PC-9 (cell line): ENCODE measurements at regions of chr11 and their contacts with region 1.

Region 1: GRCh38 chr11:63909591-63910506 is 7.1 kb downstream of the RCOR2 start:
- DNase-seq: no peak
- H3K4me3 ChIP-seq: no peak overlapping the region
- H3K27ac ChIP-seq: no peak overlapping the region
- H3K4me1 ChIP-seq: no peaks in the 10 kb centered on the region
- H3K27me3 ChIP-seq: no peaks in the 10 kb centered on the region
- CTCF ChIP-seq: no peak

Region 2: GRCh38 chr11:63779039-63779438 is 130.8 kb before region 1 on chr11:
- CTCF ChIA-PET with region 1: interaction called, 11 read pairs
- POLR2A ChIA-PET with region 1: interaction called, 5 read pairs
- intact Hi-C with region 1: no loop called
- DNase-seq: no peak
- H3K4me3 ChIP-seq: no peak overlapping the region
- H3K27ac ChIP-seq: no peak overlapping the region
- H3K4me1 ChIP-seq: no peaks in the 10 kb centered on the region
- H3K27me3 ChIP-seq: no peaks in the 10 kb centered on the region
- CTCF ChIP-seq: no peak

Region 3: DNA sequence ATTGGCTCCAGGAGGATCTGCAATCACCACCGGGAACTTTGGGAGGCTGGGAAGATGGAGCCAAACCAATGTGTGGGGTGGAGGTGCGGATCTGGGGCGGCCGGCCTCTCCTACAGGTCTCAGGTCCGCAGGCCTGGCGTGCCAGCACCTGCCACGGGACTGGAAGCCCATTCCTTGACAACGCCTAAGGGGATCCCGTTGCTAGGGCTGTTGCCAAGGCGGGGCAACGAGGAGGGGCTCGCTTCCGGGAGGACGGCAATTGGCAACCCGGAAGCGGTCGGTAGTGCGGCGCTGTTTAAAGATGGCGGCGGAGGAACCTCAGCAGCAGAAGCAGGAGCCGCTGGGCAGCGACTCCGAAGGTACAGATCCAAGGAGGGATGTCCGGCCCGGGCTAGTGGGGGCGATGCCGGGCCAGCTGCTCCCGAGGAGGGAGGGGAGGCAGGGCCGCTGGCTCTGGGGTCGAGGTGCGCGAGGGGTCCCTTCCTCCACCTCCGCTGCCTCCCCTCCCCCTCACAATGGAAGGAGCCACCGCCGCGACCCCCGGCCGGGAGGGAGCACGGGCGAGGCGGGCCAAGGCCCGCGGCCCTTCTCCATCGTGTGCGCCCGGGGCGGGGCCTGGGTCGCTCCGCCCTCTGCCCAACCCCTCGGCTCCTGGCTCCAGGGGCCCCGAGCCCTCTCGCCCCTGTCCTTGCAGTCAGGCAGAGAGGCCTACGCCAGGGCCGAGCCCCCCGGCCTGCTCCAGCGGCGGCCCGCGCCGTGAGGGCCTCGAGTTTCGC is 76.5 kb after region 1 on chr11 and contains the start of gene OTUB1:
- CTCF ChIA-PET with region 1: no interaction called
- POLR2A ChIA-PET with region 1: no interaction called
- intact Hi-C with region 1: no loop called
- DNase-seq: peak; percentile 92 to 98
- H3K4me3 ChIP-seq: peak within 1 kb of the TSS; percentile 72
- H3K27ac ChIP-seq: peak within 1 kb of the TSS; percentile 51
- H3K4me1 ChIP-seq: peaks cover 23% of the 10 kb centered on the region
- H3K27me3 ChIP-seq: no peaks in the 10 kb centered on the region
- CTCF ChIP-seq: no peak
- total RNA-seq, gene OTUB1: 105 and 119 TPM in 2 replicates

Region 4: GRCh38 chr11:64230171-64230984 is 320.5 kb after region 1 on chr11 and contains the start of gene DNAJC4:
- CTCF ChIA-PET with region 1: no interaction called
- POLR2A ChIA-PET with region 1: no interaction called
- intact Hi-C with region 1: no loop called
- DNase-seq: peak; percentile 89 to 96
- H3K4me3 ChIP-seq: peak within 1 kb of the TSS; percentile 81
- H3K27ac ChIP-seq: no peak within 1 kb of the TSS
- H3K4me1 ChIP-seq: peaks cover 31% of the 10 kb centered on the region
- H3K27me3 ChIP-seq: no peaks in the 10 kb centered on the region
- CTCF ChIP-seq: no peak
- total RNA-seq, gene DNAJC4: 55.0 and 57.1 TPM in 2 replicates